Naive thymus-derived CD4-positive, alpha-beta T cell (primary cell): ENCODE measurements at regions of chr18 and their contacts with region 1.

Region 1: DNA sequence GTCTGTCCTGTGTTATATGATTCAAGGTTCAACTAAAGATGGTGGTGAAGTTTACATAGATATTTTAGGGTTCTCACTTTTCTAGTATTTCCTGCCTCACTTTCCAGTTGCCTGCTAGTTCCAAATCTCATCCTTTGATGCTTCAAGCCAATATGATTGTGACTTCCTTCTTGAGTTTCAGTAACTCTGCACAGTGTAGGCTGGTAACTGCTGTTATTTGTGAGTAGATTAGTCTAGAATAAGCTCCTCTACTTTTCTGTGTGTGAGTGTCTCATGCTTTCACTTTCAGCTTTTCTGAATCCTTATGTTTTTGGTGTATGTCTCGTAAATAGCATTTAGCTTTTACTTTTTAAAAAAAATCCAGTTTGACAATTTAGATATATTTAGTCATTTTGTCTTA is 42.6 kb downstream of the GALNT1 start:
- DNase-seq: peak in 4 of 9 donors; percentile 9 to 29 (median 19)
- ATAC-seq: no peak
- H3K4me3 ChIP-seq: no peak overlapping the region
- H3K4me3 Mint-ChIP-seq: peak overlapping the region in 9 of 10 donors; percentile 10 to 82 (median 57)
- H3K27ac ChIP-seq: no peak overlapping the region
- H3K27ac Mint-ChIP-seq: peak overlapping the region in 7 of 9 donors; percentile 3 to 75 (median 9)
- H3K4me1 ChIP-seq: peaks cover 12 to 16% of the 10 kb centered on the region in 2 donors
- H3K4me1 Mint-ChIP-seq: peaks cover 24 to 41% (median 28%) of the 10 kb centered on the region in 7 donors
- H3K27me3 ChIP-seq: no peaks in the 10 kb centered on the region
- H3K27me3 Mint-ChIP-seq: no peaks in the 10 kb centered on the region

Region 2: DNA sequence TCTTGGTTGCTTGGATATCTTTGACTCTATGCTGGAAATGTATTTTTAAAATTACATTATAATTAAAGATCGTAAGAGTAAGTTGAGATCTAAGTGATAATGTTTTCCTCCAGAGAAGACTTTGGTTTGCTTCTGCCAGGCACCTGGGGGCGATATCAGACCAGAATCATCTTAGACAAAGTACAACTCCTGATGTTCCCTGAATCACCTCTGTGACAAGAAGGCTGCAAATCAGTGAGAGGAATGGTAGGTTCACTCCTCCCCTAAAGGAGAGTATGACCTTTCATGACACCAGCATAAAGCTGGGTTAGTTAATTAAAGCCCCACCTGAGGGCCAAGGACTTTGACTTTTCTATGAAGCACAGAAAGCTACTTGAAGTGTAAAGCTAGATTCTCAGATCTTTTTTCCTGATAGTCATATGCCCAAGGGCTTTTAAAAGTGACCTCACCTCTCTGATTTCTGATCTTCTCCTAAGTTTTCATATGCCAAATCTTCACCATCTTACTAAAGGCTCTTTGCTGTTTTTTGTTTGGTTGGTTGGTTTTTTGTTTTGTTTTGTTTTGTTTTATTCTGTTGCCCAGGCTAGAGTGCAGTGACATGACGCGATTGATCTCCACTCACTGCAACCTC is 1028.4 kb before region 1 on chr18:
- CTCF ChIA-PET with region 1: no interaction called
- POLR2A ChIA-PET with region 1: no interaction called
- intact Hi-C with region 1: no loop called
- DNase-seq: no peak
- ATAC-seq: no peak
- H3K4me3 ChIP-seq: no peak overlapping the region
- H3K4me3 Mint-ChIP-seq: no peak overlapping the region
- H3K27ac ChIP-seq: no peak overlapping the region
- H3K27ac Mint-ChIP-seq: no peak overlapping the region
- H3K4me1 ChIP-seq: no peaks in the 10 kb centered on the region
- H3K4me1 Mint-ChIP-seq: no peaks in the 10 kb centered on the region
- H3K27me3 ChIP-seq: no peaks in the 10 kb centered on the region
- H3K27me3 Mint-ChIP-seq: peaks cover 0 to 7% (median 0%) of the 10 kb centered on the region in 5 donors

Region 3: GRCh38 chr18:35240664-35241447 is 383.3 kb before region 1 on chr18 and contains the start of gene ZNF397:
- CTCF ChIA-PET with region 1: no interaction called
- POLR2A ChIA-PET with region 1: no interaction called
- intact Hi-C with region 1: no loop called
- DNase-seq: peak; percentile 87 to 96 (median 91)
- ATAC-seq: peak; percentile 99
- H3K4me3 ChIP-seq: peak within 1 kb of the TSS; percentile 94
- H3K4me3 Mint-ChIP-seq: peak within 1 kb of the TSS; percentile 88 to 98 (median 96)
- H3K27ac ChIP-seq: peak within 1 kb of the TSS; percentile 97
- H3K27ac Mint-ChIP-seq: peak within 1 kb of the TSS; percentile 90 to 99 (median 98)
- H3K4me1 ChIP-seq: peaks cover 9 to 17% of the 10 kb centered on the region in 2 donors
- H3K4me1 Mint-ChIP-seq: peaks cover 16 to 41% (median 31%) of the 10 kb centered on the region in 7 donors
- H3K27me3 ChIP-seq: no peaks in the 10 kb centered on the region
- H3K27me3 Mint-ChIP-seq: no peaks in the 10 kb centered on the region
- total RNA-seq, gene ZNF397: 12.1 to 59.1 (median 27.6) TPM

Region 4: DNA sequence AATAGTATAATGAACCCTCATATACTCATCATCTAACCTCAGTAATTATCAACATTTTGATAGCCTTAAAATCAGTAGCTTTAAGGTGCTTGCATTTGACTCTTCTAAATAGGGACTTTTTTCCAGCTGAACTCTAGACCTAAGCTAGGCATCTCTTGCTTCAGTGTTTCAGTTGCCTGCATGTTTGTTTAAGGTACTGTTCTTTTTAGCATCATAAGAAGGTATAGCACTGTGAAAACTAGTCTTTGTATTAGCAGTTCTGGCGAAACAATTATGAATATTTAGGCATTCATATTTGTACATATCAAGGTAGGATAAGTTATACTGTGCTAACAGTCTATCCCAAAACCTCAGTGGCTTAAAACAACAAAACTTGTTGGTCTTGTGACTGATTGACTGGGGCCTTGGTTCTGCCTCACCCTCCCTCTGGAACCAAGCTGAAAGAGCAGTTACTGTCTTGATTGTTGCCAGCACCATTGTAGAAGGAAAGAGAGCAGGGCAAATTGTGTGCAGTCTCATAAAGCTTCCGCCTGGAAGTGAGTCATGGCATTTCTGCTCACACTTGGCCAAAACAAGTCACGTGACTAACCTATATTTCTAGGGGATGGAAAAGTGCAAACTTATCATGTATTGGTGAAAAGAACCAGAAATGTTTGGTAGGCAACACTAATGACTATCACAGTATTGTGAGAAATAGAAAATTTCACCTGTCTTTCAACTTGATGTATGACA is 18.3 kb before region 1 on chr18:
- CTCF ChIA-PET with region 1: no interaction called
- POLR2A ChIA-PET with region 1: no interaction called
- intact Hi-C with region 1: loop called in 1 of 2 experiments (anchors 2 kb)
- DNase-seq: no peak
- ATAC-seq: no peak
- H3K4me3 ChIP-seq: no peak overlapping the region
- H3K4me3 Mint-ChIP-seq: no peak overlapping the region
- H3K27ac ChIP-seq: no peak overlapping the region
- H3K27ac Mint-ChIP-seq: peak overlapping the region in 2 of 9 donors; percentile 8 to 21
- H3K4me1 ChIP-seq: no peaks in the 10 kb centered on the region
- H3K4me1 Mint-ChIP-seq: peaks cover 7 to 49% (median 32%) of the 10 kb centered on the region in 7 donors
- H3K27me3 ChIP-seq: no peaks in the 10 kb centered on the region
- H3K27me3 Mint-ChIP-seq: no peaks in the 10 kb centered on the region

Region 5: GRCh38 chr18:36688020-36688965 is 1064.1 kb after region 1 on chr18:
- CTCF ChIA-PET with region 1: no interaction called
- POLR2A ChIA-PET with region 1: no interaction called
- intact Hi-C with region 1: no loop called
- DNase-seq: peak in 5 of 9 donors; percentile 8 to 47 (median 25)
- ATAC-seq: peak; percentile 31
- H3K4me3 ChIP-seq: no peak overlapping the region
- H3K4me3 Mint-ChIP-seq: no peak overlapping the region
- H3K27ac ChIP-seq: no peak overlapping the region
- H3K27ac Mint-ChIP-seq: no peak overlapping the region
- H3K4me1 ChIP-seq: no peaks in the 10 kb centered on the region
- H3K4me1 Mint-ChIP-seq: no peaks in the 10 kb centered on the region
- H3K27me3 ChIP-seq: no peaks in the 10 kb centered on the region
- H3K27me3 Mint-ChIP-seq: peaks cover 4 to 24% (median 19%) of the 10 kb centered on the region in 5 donors